WTC11 (cell line): ENCODE measurements at regions of chr20 and their contacts with region 1.

Region 1: DNA sequence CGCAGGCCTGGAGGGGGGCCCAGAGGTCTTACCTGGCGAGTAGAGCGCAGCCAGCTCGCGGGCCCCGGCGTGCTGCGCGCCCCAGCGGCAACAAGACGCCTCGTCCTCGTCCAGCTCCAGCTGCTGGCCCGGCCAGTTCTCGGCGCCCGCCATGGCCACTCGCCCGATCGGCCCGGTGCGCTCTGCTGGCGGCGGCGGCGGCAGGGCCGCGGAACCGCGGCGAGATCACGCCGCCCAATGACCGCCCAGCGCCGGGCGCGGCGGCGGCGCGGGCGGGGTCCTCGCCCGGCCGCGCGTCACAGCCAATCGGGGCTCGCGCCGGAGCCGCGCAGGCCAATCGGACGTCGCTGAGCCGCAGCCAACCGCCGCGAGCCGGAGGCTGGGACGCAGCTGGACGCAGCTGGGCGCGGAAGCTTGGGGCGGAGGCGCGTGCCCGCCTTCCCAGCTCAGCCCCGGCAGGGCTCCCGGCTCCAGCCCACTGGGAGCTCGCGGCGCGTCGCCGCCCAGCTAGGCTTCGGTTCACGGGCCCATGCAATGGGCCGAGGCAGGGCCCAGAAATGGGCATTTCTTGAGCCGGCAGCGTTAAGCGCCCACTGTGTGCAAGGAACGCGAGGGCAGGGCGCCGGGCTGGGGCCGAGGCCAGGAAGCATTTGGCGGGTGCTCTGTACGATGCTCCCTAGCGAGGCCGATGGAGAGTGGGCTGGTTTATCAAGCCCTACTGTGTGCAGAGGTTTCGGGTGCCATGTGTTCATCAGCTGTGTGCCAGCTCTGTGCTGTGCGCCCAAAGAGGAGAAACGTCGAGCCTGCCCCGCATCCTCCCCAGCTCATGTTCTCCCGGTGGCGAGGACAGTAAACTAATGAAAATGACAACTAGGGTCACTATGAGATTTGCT is at the start of gene PEDS1:
- DNase-seq: peak; percentile 88
- ATAC-seq: peak; percentile 91
- H3K4me3 Mint-ChIP-seq: peak within 1 kb of the TSS; percentile 83
- H3K27ac Mint-ChIP-seq: peak within 1 kb of the TSS; percentile 89
- H3K4me1 Mint-ChIP-seq: peaks cover 41% of the 10 kb centered on the region
- H3K27me3 Mint-ChIP-seq: peaks cover 15% of the 10 kb centered on the region
- CTCF ChIP-seq: no peak
- total RNA-seq, gene PEDS1: 35.0 to 36.7 TPM (median 35.6 TPM) in 3 replicates

Region 2: DNA sequence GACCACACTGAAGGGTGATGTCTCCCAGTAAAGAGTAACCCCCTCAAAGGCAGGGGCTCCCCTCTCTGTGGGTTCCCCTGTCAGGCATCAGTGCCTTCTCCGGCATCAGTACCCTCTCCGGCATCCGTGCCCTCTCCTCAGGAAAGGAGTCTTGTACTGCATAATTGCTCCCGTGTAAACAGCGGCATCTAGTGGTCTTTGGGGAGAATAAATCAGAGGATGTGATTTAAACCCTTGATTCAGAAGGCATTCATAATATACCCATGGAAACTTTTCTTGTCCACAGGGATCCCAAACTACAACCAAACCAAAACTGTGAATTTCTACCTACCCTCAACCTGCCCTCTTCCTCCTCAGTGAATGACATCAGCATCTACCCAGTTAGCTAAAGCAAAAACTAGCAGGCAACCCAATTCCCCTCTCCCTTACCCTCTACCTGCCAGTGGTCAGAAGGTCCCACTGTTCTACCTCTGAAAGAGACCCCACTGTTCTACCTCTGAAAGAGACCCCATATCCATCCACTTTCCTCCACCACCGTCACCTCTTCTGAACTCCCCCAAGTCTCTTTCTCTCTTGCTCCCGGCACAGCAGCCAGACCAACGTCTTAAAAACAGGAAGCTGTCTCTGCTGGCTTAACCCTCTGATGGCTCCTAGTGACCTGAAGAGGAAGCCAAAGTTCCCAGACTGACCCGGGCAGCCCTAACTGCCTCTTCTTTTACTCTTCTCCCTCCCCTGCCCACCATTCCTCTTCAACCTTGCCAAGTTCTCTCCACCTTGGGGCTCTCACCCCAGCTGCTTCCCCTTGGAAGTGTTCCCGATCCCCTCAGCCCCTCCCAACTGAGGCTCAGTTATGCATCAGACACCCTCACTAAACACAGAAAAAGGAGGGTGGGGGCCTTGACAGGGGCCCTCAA is 68.0 kb before region 1 on chr20:
- CTCF ChIA-PET with region 1: interaction called, 12 read pairs
- POLR2A ChIA-PET with region 1: no interaction called
- DNase-seq: peak; percentile 50
- ATAC-seq: peak; percentile 90
- H3K4me3 Mint-ChIP-seq: peak overlapping the region; percentile 31
- H3K27ac Mint-ChIP-seq: peak overlapping the region; percentile 87
- H3K4me1 Mint-ChIP-seq: peaks cover 27% of the 10 kb centered on the region
- H3K27me3 Mint-ChIP-seq: no peaks in the 10 kb centered on the region
- CTCF ChIP-seq: peak; percentile 62

Region 3: DNA sequence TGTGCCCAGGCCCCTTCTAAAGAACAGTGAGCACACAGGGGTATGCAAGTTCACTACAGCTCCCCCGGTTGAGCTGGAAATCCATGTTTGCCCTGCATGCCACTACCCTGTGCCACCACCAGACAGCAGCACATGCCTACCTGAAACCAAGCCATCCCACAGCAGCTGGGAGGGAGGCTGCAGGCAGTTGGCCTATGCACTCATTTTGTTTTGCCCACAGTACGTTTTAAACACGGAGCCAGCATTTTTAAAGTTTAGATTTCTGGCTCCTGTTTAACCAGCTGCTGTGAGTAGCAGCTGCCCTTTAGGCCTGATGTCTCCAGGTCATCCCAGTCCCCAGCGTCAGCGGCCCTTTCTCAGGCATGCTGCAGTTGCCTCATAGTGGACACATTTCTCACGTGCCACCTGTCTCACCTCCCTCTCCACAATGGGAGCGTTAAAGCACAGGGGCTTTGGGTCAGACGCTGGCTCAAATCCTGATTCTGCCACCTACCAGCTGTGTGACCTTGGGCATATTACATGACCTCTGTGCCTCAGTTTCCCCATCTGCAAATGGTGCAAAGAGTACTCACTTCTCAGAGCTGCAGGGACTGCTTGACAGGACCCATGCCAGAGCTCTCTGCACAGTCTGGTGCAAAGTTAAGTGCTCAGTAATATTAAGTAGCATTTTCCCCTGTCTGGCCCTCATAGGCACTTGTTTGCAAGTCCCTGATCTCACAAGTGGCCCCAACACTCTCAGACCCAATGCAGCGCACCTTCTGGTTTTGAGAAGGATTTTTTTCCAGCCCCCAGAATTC is 32.6 kb before region 1 on chr20:
- CTCF ChIA-PET with region 1: interaction called, 89 read pairs
- POLR2A ChIA-PET with region 1: interaction called, 12 read pairs
- DNase-seq: peak; percentile 70
- ATAC-seq: peak; percentile 86
- H3K4me3 Mint-ChIP-seq: no peak overlapping the region
- H3K27ac Mint-ChIP-seq: peak overlapping the region; percentile 57; the same call in 1 of the 2 replicates
- H3K4me1 Mint-ChIP-seq: peaks cover 6% of the 10 kb centered on the region
- H3K27me3 Mint-ChIP-seq: 0 out of 2 replicates have a peak, but pooled peaks cover 2% of the 10 kb centered on the region
- CTCF ChIP-seq: peak; percentile 47

Region 4: DNA sequence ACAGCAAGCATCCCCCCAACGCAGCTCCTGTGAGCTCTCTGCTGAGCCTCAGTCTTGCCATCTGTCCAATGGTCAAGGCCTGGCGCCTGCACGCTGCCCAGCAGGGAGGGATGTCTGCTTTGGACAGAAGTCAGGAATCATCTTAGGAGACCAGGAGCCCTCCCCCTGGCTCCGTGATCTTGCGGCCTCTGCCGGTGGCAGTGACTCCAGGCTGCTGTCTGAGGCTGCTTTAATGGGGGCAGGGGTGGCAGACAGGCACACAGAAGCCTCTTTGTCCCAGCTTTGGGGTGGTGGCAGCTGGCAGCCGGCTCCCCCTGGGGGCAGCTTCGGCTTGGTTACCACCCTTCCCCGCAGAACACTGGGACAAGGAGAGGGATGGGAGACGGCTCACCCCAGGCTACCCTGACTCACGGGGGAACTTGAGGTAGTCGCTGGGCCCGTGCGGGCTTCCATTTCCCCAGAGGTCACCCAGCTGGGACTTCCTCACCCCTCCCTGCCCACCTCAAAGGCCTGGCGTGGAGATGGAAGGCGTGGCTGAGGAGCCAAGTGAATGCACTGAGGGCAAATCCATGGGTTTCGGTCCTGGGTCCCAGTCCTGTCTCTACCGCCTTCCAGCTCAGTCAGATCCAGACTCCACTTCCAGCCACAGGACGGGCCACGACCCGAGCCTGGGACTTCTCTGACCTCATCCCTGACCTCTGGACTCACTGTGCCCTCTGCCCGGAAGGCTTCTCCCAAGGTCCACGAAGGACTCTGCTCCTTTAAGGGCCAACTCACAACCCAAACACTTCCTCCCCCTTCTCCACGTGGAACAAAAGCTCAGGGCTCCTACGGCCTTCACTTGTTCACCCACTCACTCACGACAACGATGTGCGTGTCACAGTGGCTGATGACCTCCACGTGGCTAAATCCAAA is 15.0 kb before region 1 on chr20:
- CTCF ChIA-PET with region 1: interaction called, 17 read pairs
- POLR2A ChIA-PET with region 1: interaction called, 14 read pairs
- DNase-seq: peak; percentile 36
- ATAC-seq: peak; percentile 55
- H3K4me3 Mint-ChIP-seq: no peak overlapping the region
- H3K27ac Mint-ChIP-seq: peak overlapping the region; percentile 9; the same call in 1 of the 2 replicates
- H3K4me1 Mint-ChIP-seq: peaks cover 29% of the 10 kb centered on the region
- H3K27me3 Mint-ChIP-seq: no peaks in the 10 kb centered on the region
- CTCF ChIP-seq: no peak

Region 5: GRCh38 chr20:50172347-50173013 is 18.7 kb after region 1 on chr20:
- CTCF ChIA-PET with region 1: interaction called, 37 read pairs
- POLR2A ChIA-PET with region 1: interaction called, 11 read pairs
- DNase-seq: peak; percentile 93
- ATAC-seq: peak; percentile 96
- H3K4me3 Mint-ChIP-seq: peak overlapping the region; percentile 61
- H3K27ac Mint-ChIP-seq: peak overlapping the region; percentile 86
- H3K4me1 Mint-ChIP-seq: peaks cover 20% of the 10 kb centered on the region
- H3K27me3 Mint-ChIP-seq: no peaks in the 10 kb centered on the region; the same call in 1 of the 2 replicates
- CTCF ChIP-seq: no peak